Motor neuron (in vitro differentiated cells): ENCODE measurements at regions of chr18 and their contacts with region 1.

Region 1: DNA sequence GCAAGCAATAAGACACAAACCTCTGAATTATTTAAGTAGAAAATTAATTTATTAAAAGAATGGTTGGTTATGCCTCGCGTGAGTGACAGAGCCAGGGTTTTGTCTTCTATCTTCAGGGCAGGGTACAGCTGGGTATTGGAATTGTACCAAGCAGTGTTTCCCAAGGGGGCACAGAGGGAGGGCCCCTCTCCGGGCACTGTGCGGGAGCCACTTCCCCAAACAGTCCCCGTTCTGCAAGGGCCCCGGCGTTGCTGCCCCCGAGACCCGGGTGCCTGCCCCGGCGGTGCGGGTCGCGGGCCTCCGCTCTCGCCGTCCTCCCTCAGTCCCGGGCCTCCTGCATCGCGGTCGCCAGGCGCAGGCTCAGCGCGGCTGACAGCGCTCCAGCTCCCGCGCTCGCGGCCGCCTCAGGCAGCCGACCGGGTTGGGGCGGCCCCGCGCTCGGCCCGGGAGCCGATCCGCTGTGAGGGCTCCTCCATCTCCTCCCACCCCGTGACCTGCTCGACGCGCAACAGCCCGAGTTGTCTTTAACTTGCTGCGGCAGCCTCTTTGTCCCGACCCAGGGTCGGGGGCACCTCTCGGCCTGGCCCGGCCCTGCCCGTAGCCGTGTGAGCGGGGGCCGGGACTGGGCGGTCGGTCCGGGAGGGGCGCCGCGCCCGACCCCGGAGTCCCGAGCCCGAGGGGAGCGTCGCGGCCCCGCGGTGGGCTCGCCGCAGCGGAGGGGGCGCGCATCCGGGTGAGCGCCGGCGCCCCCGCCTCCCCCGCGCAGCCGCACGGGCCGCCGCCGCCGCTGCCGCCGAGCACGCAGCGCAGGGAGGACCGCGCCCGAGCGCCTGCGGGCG is 620 bp upstream of the GALNT1 start:
- ATAC-seq: peak; percentile 78 to 90 (median 82)
- H3K4me3 ChIP-seq: peak overlapping the region; percentile 73 to 100 (median 99)
- H3K27ac ChIP-seq: peak overlapping the region; percentile 93 to 97
- H3K4me1 ChIP-seq: peaks cover 6 to 11% of the 10 kb centered on the region in 2 donors

Region 2: GRCh38 chr18:35215026-35215425 is 365.9 kb before region 1 on chr18:
- in situ Hi-C with region 1: no loop called
- ATAC-seq: no peak
- H3K4me3 ChIP-seq: no peak overlapping the region
- H3K27ac ChIP-seq: no peak overlapping the region
- H3K4me1 ChIP-seq: no peaks in the 10 kb centered on the region

Region 3: DNA sequence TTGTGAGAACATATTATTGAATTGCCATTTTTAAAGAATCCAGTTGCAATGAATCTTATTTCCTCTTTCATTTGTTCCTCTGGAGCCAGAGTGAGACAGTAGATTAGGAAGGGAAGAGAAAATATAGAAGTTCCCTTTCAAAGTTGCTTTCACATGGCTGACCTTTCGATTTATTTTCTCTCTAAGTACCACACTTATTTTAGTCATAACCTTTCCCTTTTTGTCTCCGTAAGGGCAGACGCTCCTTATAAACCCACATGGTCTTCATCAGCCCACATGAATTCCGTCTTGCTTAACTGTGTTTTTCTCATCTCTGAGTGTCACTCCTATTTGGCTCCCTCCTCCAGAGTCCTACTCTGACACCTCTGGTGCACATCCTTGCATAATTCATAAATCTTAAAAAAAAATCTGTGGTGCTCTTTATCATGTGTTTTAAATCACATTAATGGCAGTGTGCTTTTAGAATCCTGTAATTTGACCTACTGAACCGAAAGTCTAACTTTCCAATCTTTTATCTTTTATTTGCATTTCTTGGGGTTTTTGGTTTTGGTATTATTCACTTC is 165.3 kb before region 1 on chr18:
- in situ Hi-C with region 1: loop called in 1 of 9 experiments (anchors 10 kb)
- ATAC-seq: peak in 2 of 8 experiments; percentile 53 to 58
- H3K4me3 ChIP-seq: no peak overlapping the region
- H3K27ac ChIP-seq: no peak overlapping the region
- H3K4me1 ChIP-seq: peaks cover 0 to 3% of the 10 kb centered on the region in 2 donors